ENCODE measurements at regions of chr1 and their contacts with region 1.

Region 1: DNA sequence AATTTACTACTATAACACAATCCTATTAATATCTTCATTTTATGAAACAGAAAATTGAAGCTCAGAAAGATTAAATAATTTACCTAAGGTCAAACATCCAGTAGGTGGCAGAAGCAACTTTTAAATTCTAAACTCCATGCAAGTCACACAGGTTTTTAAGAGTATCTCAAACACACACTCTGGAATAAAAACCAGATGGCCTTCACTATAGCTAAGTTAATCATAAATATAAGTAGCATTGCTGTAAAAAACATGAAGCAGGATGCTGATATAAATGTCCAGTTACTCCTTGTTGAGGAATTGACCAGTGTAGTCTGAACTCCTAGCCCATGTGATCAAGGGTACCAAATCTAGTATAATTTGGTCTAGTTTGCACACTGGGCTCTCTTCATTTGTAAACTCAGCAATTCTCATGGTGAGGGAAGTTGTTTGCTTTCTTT is 9.4 kb upstream of the FMO3 start:
- DNase-seq: peak; percentile 15
- ATAC-seq: no peak
- H3K4me3 ChIP-seq: no peak overlapping the region
- H3K27ac ChIP-seq: no peak overlapping the region
- H3K4me1 ChIP-seq: no peaks in the 10 kb centered on the region
- H3K27me3 ChIP-seq: no peaks in the 10 kb centered on the region
- CTCF ChIP-seq: peak; percentile 21 to 54 (median 47); a peak in 4 of 6 replicates
- POLR2A ChIP-seq: no peak
- RAD21 ChIP-seq: peak; percentile 61

Region 2: GRCh38 chr1:170967042-170967910 is 114.1 kb before region 1 on chr1:
- CTCF ChIA-PET with region 1: interaction called, 10 read pairs
- POLR2A ChIA-PET with region 1: no interaction called
- RAD21 ChIA-PET with region 1: no interaction called
- intact Hi-C with region 1: no loop called
- DNase-seq: peak; percentile 32
- ATAC-seq: peak; percentile 90
- H3K4me3 ChIP-seq: no peak overlapping the region
- H3K27ac ChIP-seq: no peak overlapping the region
- H3K4me1 ChIP-seq: no peaks in the 10 kb centered on the region
- H3K27me3 ChIP-seq: no peaks in the 10 kb centered on the region
- CTCF ChIP-seq: peak; percentile 55 to 66 (median 63); a peak in 5 of 6 replicates
- POLR2A ChIP-seq: no peak
- RAD21 ChIP-seq: peak; percentile 62

Region 3: DNA sequence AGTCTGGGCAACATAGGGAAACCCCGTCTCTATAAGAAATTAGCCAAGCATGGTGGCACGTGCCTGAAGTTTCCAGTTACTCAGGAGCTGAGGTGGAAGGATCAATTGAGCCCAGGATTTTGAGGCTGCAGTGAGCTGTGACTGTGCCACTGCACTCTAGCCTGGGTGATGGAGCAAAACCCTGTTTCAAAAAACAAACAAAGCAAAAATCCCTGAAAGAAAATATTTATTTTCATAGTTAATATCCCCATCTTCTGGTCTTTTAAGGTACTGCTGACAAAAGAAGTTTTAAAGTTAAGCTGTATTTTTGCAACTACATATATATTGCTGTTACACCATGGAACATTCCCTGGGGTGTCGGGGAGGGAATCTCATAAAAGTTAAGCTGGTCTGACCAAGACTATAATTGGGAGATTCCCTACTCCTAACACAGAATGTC is 634.5 kb after region 1 on chr1:
- CTCF ChIA-PET with region 1: interaction called, 8 read pairs
- POLR2A ChIA-PET with region 1: no interaction called
- RAD21 ChIA-PET with region 1: interaction called in 1 of 2 experiments, 4 read pairs
- intact Hi-C with region 1: loop called (anchors 10 kb)
- DNase-seq: no peak
- ATAC-seq: peak; percentile 49
- H3K4me3 ChIP-seq: no peak overlapping the region
- H3K27ac ChIP-seq: no peak overlapping the region
- H3K4me1 ChIP-seq: no peaks in the 10 kb centered on the region
- H3K27me3 ChIP-seq: no peaks in the 10 kb centered on the region
- CTCF ChIP-seq: peak; percentile 23 to 53 (median 50); a peak in 4 of 6 replicates
- POLR2A ChIP-seq: no peak
- RAD21 ChIP-seq: peak; percentile 60